ENCODE measurements at regions of chr10 and their contacts with region 1.

Region 1: GRCh38 chr10:95363303-95363912 is 72.6 kb upstream of the PDLIM1 start:
- DNase-seq: no peak
- H3K4me3 ChIP-seq: no peak overlapping the region
- H3K27me3 ChIP-seq: no peaks in the 10 kb centered on the region
- CTCF ChIP-seq: peak; percentile 80

Region 2: GRCh38 chr10:95183271-95184230 is 179.9 kb before region 1 on chr10:
- CTCF ChIA-PET with region 1: interaction called, 15 read pairs
- POLR2A ChIA-PET with region 1: no interaction called
- DNase-seq: peak; percentile 18
- H3K4me3 ChIP-seq: peak overlapping the region; percentile 52
- H3K27me3 ChIP-seq: no peaks in the 10 kb centered on the region
- CTCF ChIP-seq: peak; percentile 86

Region 3: DNA sequence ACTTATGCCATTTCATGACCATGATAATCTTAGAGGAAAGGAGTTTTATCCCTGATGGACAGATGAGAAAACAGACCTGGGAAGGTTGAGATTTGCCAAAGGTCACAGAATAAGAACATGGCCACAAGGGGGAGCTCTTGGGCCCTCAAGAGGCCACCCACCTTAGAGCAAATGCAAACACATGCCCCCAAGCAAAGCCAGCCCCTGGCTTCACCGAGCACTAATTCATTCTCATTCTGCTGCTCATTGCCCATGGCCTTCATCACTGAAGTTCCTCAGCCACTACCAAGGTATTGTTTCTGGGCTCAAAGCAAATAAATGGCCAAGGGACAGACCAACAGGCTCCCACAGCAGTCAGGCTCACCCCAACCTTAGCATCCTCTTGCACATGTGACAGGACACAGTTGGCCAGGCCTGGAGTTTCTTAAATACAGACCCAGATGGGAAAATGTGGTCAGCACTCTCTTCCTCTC is 116.8 kb before region 1 on chr10:
- CTCF ChIA-PET with region 1: interaction called, 322 read pairs
- POLR2A ChIA-PET with region 1: no interaction called
- DNase-seq: no peak
- H3K4me3 ChIP-seq: no peak overlapping the region
- H3K27me3 ChIP-seq: no peaks in the 10 kb centered on the region
- CTCF ChIP-seq: peak; percentile 81

Region 4: DNA sequence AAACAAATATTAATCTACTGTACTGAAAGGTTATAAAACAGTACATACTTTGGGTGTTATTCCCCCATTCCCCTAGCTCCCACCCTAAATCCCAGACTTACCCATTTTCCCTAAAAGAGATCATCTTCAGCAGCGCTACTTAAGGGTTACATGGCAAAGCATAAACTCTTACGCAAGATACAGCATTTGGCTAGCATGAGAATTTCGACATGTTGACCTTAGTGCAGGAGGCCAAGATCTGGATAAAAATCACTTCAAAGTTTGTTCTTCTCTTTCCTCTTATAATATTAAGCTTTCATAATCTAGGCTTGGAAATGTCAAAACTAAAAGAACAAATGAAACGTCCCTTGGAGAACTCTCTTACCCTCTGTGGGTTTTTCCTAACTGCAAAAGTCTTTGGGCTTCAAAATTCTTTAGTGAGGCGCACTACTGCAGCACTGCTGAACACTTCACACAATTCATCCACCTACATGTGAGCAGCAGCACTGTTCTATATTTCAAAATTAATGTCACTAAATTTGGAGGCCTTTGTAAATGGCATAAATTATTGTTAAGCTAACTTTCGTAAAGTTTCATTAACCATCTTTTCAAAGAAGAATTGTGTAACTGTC is 13.1 kb before region 1 on chr10:
- CTCF ChIA-PET with region 1: interaction called, 21 read pairs
- POLR2A ChIA-PET with region 1: no interaction called
- DNase-seq: no peak
- H3K4me3 ChIP-seq: no peak overlapping the region
- H3K27me3 ChIP-seq: peaks cover 2% of the 10 kb centered on the region
- CTCF ChIP-seq: no peak

Measured in BJ (cell line).